ENCODE measurements at regions of chr11 and their contacts with region 1.

Region 1: GRCh38 chr11:33475993-33476392 is 218.8 kb downstream of the HIPK3 start:
- DNase-seq: peak in 1 of 2 donors; percentile 26
- ATAC-seq: no peak
- H3K4me3 ChIP-seq: no peak overlapping the region
- H3K27ac ChIP-seq: no peak overlapping the region
- H3K4me1 ChIP-seq: peaks cover 0 to 9% (median 0%) of the 10 kb centered on the region in 9 donors
- H3K27me3 ChIP-seq: peaks cover 0 to 52% (median 23%) of the 10 kb centered on the region in 7 donors
- CTCF ChIP-seq: no peak

Region 2: DNA sequence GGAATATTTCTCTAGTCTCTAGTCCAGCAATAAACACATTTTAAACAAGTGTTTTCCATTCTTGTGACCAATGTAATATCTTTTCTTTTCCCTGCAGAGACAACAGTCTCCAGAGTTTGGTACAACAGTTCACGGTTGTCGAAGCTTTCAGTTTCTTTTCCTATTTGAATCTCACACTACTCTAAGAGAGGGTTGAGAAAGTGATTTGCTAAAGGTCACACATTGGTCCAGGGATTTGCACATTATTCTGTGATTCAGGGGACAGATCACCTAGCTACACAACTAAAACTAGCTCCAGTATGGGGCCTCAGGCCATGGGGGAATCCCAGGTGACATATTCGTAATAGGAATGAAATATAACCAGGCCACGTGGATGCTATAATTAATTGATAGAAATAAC is 86.4 kb before region 1 on chr11:
- intact Hi-C with region 1: no loop called
- DNase-seq: no peak
- ATAC-seq: no peak
- H3K4me3 ChIP-seq: no peak overlapping the region
- H3K27ac ChIP-seq: no peak overlapping the region
- H3K4me1 ChIP-seq: peaks cover 0 to 8% (median 0%) of the 10 kb centered on the region in 9 donors
- H3K27me3 ChIP-seq: peaks cover 0 to 3% (median 0%) of the 10 kb centered on the region in 7 donors
- CTCF ChIP-seq: no peak

Region 3: GRCh38 chr11:33588084-33588483 is 112.1 kb after region 1 on chr11:
- intact Hi-C with region 1: loop called in 1 of 10 experiments (anchors 10 kb)
- DNase-seq: no peak
- ATAC-seq: no peak
- H3K4me3 ChIP-seq: no peak overlapping the region
- H3K27ac ChIP-seq: no peak overlapping the region
- H3K4me1 ChIP-seq: no peaks in the 10 kb centered on the region
- H3K27me3 ChIP-seq: peaks cover 0 to 15% (median 0%) of the 10 kb centered on the region in 7 donors
- CTCF ChIP-seq: no peak

Measured in heart right ventricle (tissue), 16 donors.